RWPE1 (cell line): ENCODE measurements at regions of chr17 and their contacts with region 1.

Region 1: GRCh38 chr17:43878260-43879175 is 28.8 kb downstream of the MPP2 start:
- DNase-seq: peak; percentile 91
- H3K27ac ChIP-seq: peak overlapping the region; percentile 57
- CTCF ChIP-seq: peak; percentile 98

Region 2: GRCh38 chr17:43760254-43760852 is 118.2 kb before region 1 on chr17:
- CTCF ChIA-PET with region 1: no interaction called
- POLR2A ChIA-PET with region 1: no interaction called
- DNase-seq: peak; percentile 96
- H3K27ac ChIP-seq: peak overlapping the region; percentile 43
- CTCF ChIP-seq: peak; percentile 98

Region 3: DNA sequence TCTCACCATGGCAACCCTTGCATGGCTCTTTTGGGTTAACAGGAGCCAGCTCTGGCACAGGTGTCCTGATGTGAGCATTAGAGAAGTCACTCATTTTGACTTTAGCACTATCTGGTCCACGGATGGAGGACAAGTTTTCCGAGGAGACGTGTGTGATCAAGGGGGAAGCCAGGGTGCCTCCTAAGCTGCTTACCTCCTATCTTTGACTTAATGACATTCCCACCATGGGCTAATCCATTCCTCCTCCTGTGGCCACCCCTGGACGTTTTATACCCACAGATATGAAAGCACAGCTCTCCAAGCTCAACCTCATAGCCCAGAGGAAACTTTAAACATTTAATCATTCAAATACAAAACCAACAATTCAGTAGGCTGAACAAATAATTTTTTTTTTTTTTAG is 10.0 kb after region 1 on chr17:
- CTCF ChIA-PET with region 1: interaction called, 11 read pairs
- POLR2A ChIA-PET with region 1: no interaction called
- DNase-seq: no peak
- H3K27ac ChIP-seq: no peak overlapping the region
- CTCF ChIP-seq: no peak

Region 4: DNA sequence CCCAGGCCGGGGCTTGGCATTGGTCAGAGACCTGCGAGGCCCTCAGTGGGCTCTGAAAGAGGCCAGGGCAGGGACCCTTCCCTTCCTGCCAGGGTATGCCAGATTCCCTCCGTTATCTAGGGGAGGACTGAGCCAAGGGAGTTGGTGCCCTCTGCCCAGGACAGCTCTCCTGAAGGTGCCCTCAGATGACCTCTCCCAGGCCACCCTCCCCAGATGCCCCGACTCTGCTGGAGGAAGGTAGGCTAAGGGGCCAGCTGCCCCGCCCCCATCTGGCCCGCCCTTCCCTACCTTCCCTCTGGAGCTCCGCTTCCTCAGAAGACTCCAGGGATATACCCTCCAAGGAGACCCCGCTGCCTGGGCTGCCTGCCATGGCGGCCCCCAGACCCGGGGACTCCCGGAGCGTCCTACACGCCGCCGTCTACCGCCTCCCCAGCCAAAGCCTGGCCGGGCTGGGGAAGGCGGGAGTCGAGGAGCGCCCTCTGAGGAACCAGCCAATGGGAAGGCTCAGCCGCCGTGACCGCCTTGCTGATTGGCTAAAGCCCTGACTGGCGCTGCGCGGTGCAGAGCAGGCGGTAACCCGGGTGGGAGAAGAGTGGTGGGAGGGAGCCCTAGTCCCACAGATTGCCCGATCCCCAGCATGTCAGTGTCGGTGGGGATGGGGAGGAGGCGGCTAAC is 21.8 kb after region 1 on chr17:
- CTCF ChIA-PET with region 1: interaction called, 56 read pairs
- POLR2A ChIA-PET with region 1: no interaction called
- DNase-seq: peak; percentile 97
- H3K27ac ChIP-seq: no peak overlapping the region
- CTCF ChIP-seq: no peak